GM13976 (cell line): ENCODE measurements at regions of chr10 and their contacts with region 1.

Region 1: GRCh38 chr10:31490858-31491504 is 172.0 kb downstream of the ZEB1 start:
- DNase-seq: no peak
- CTCF ChIP-seq: no peak

Region 2: GRCh38 chr10:30783939-30784500 is 707.0 kb before region 1 on chr10:
- in situ Hi-C with region 1: loop called (anchors 25 kb)
- DNase-seq: peak; percentile 90
- CTCF ChIP-seq: peak; percentile 64